HepG2 (cell line): ENCODE measurements at regions of chr12 and their contacts with region 1.

Region 1: GRCh38 chr12:130761537-130762318 is 45.6 kb upstream of the RIMBP2 start:
- DNase-seq: peak; percentile 54
- ATAC-seq: peak; percentile 92
- H3K4me3 ChIP-seq: peak overlapping the region in 1 of 3 experiments; percentile 57; a peak in 2 of 6 replicates
- H3K27ac ChIP-seq: no peak overlapping the region
- H3K4me1 ChIP-seq: peaks cover 7% of the 10 kb centered on the region
- H3K27me3 ChIP-seq: peaks cover 3 to 15% of the 10 kb centered on the region in 2 experiments; a peak in 4 of 5 replicates
- CTCF ChIP-seq: peak; percentile 97
- EP300 ChIP-seq: no peak
- POLR2A ChIP-seq: no peak
- RAD21 ChIP-seq: peak; percentile 94

Region 2: DNA sequence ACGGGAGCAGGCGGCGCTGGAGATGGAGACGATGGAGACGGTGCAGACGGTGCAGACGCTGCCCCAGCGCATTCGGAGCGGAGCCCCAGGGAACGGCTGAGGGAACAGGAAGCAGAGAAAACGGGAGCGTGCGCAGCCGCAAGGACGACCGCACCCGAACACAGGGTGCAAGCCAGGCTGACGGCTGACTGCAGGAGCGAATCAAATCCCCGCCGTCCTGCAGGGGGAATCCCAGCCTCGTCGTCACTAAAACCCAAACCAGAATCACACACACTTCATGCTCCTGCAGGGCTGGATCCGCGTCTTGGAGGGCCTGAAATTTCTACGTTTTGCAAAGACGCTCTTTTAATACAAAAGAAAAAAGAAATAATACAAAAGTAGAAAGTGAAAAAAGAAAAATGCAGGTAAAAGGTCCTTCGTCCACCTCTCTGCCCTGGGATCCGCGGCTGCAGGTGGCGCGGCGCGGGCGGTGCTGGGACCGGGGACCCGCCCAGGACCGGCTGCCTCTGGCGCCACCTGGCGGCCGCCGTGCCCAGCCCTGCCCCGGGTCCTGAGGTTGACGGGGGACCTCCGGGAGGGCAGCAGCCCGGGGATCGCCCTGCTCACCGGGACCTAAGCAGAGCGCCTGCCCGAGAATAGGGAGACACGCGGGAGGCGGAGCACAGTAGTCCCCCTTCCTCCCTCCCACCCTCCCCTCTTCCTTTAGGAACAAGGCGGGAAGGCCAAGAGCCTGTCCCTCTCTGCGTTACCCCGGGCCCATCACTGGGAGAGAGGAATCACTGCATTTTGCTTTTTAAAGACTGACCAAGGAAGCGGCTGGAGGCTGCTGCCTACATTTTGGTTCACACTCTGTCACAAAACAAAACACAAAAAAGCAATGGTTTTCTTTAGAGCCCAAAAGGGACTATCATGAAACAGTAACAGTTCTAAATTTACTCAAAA is 57.2 kb after region 1 on chr12:
- CTCF ChIA-PET with region 1: interaction called, 76 read pairs
- POLR2A ChIA-PET with region 1: no interaction called
- in situ Hi-C with region 1: loop called (anchors 5 kb)
- intact Hi-C with region 1: loop called (anchors 1 kb)
- DNase-seq: no peak
- ATAC-seq: peak; percentile 100
- H3K4me3 ChIP-seq: no peak overlapping the region
- H3K27ac ChIP-seq: no peak overlapping the region
- H3K4me1 ChIP-seq: no peaks in the 10 kb centered on the region
- H3K27me3 ChIP-seq: no peaks in the 10 kb centered on the region
- CTCF ChIP-seq: peak; percentile 83
- EP300 ChIP-seq: no peak
- POLR2A ChIP-seq: no peak
- RAD21 ChIP-seq: peak; percentile 94